Gastrocnemius medialis (tissue), 4 donors: ENCODE measurements at regions of chr10 and their contacts with region 1.

Region 1: DNA sequence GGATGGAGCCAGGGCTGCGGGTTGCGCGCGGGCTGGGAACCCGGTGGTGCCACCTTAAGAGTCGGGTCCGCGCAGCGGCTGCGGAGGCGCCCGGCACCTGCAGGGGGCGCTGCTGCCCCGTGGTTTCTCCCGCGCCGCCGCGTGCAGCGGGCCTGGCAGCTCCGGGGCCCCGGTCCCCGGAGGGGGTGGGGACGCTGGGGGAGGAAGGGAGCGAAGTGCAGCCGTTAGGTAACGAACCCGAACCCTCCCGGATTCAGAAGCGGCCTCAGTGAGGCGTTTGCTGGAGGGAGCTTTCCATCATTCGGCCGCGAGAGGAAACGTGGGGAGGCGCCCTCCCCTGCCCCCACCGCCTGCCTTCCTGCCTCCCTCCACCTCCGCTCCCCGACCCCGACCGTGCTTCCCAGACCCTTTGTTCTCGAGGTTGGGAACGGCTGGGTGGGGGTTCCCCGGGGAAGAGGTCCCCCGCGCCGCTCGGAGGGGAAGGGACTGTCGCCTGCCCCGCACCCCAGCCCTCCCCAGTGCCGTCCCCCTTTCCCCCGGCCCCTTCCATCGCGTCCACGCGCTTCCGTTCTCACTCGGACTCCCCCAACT is 29.6 kb downstream of the SKIDA1 start:
- DNase-seq: peak; percentile 36 to 62
- ATAC-seq: peak; percentile 84 to 88
- H3K4me3 ChIP-seq: peak overlapping the region; percentile 59 to 84 (median 70)
- H3K27ac ChIP-seq: peak overlapping the region in 2 of 4 donors; percentile 51 to 58
- H3K4me1 ChIP-seq: peaks cover 4 to 29% of the 10 kb centered on the region in 2 donors
- H3K27me3 ChIP-seq: peaks cover 0 to 42% (median 40%) of the 10 kb centered on the region in 3 donors
- CTCF ChIP-seq: peak; percentile 87 to 99 (median 98)
- POLR2A ChIP-seq: no peak

Region 2: DNA sequence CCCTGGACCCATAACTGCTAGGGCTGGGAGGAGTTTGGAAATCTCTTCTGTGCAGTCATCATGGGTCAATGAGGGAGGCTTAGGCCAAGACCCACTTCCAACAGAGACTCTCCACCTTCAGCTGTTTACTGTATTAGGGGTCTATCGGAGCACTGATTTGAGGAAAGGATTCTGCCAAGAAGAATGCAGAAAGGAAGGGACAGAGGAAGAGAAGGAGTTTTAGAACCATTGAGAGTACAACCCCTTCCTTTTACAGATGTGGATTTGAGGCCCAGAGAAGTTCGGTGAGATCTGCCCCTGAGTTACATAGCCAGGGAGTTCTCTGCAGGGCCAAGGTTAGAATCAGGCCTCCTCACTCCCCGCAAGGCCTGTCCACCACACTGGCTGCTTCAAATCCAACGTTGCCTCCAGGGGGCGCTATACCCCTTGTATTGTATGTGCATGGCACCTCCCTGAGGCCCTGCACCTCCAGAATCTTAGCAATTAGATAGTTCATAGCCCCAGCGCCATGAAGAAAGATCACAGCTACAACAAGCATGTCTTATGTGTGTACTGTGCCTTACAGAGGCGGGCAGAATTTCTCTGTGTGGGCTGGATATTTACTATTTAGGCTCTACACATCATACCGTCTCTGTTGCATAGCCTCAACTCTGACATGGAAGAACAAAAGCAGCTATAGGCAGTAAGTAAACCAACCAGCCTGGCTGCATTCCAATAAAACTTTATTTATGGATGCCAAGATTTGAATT is 217.2 kb before region 1 on chr10:
- in situ Hi-C with region 1: loop called in 2 of 4 experiments (anchors 10 to 25 kb)
- intact Hi-C with region 1: loop called (anchors 5 kb)
- DNase-seq: peak; percentile 50 to 61
- ATAC-seq: peak; percentile 33 to 51
- H3K4me3 ChIP-seq: no peak overlapping the region
- H3K27ac ChIP-seq: no peak overlapping the region
- H3K4me1 ChIP-seq: no peaks in the 10 kb centered on the region
- H3K27me3 ChIP-seq: no peaks in the 10 kb centered on the region
- CTCF ChIP-seq: peak in 4 of 5 experiments; percentile 53 to 61 (median 56)
- POLR2A ChIP-seq: no peak

Region 3: GRCh38 chr10:21475393-21475792 is 20.5 kb before region 1 on chr10:
- in situ Hi-C with region 1: no loop called
- intact Hi-C with region 1: no loop called
- DNase-seq: no peak
- ATAC-seq: no peak
- H3K4me3 ChIP-seq: no peak overlapping the region
- H3K27ac ChIP-seq: no peak overlapping the region
- H3K4me1 ChIP-seq: no peaks in the 10 kb centered on the region
- H3K27me3 ChIP-seq: no peaks in the 10 kb centered on the region
- CTCF ChIP-seq: no peak
- POLR2A ChIP-seq: no peak

Region 4: GRCh38 chr10:21533467-21534279 is 37.8 kb after region 1 on chr10 and contains the start of gene MLLT10:
- in situ Hi-C with region 1: no loop called
- intact Hi-C with region 1: loop called (anchors 1 kb)
- DNase-seq: peak; percentile 89 to 95
- ATAC-seq: peak; percentile 74 to 75
- H3K4me3 ChIP-seq: peak within 1 kb of the TSS; percentile 77 to 98 (median 88)
- H3K27ac ChIP-seq: peak within 1 kb of the TSS; percentile 90 to 100 (median 98)
- H3K4me1 ChIP-seq: peaks cover 25% of the 10 kb centered on the region in 2 donors
- H3K27me3 ChIP-seq: no peaks in the 10 kb centered on the region
- CTCF ChIP-seq: peak; percentile 33 to 54 (median 46)
- POLR2A ChIP-seq: peak; percentile 85 to 90
- total RNA-seq, gene MLLT10: 13.6 to 26.6 (median 21.6) TPM

Region 5: DNA sequence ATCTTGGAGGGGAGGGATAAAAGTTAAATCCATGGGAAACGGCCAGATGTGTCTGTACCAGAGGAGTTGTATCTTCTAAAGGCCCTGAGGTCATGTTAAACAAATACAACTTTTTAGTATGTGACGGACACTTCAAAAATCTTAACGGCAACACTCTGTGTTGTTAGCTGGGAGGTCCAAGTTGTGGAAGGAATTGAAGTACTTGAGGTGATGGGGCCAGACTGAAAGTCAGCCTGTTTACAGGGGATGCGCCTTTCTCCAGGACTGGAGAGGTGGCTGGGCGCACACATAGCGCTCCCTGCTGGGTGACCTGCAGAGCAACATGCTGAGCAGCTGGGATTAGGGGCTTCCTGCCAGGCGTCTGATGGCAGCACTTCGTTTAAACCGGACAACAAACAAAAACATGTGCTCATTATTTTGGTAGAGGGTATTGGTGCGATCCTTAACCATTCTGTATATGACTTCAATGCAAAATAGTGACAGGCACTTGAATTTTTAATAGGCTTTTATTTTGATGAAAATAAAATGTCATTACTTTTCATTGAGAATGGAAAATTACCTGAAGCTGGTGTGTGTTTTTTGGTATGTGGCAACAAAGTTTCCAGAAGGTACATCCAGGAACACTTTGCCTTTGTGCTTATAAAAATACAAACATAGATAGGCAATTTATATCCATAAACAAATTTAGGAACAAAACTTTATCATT is 236.4 kb after region 1 on chr10:
- in situ Hi-C with region 1: loop called (anchors 5 to 10 kb)
- intact Hi-C with region 1: loop called (anchors 1 kb)
- DNase-seq: peak; percentile 38 to 61
- ATAC-seq: peak; percentile 86
- H3K4me3 ChIP-seq: no peak overlapping the region
- H3K27ac ChIP-seq: no peak overlapping the region
- H3K4me1 ChIP-seq: no peaks in the 10 kb centered on the region
- H3K27me3 ChIP-seq: no peaks in the 10 kb centered on the region
- CTCF ChIP-seq: peak; percentile 66 to 90 (median 82)
- POLR2A ChIP-seq: no peak

Region 6: DNA sequence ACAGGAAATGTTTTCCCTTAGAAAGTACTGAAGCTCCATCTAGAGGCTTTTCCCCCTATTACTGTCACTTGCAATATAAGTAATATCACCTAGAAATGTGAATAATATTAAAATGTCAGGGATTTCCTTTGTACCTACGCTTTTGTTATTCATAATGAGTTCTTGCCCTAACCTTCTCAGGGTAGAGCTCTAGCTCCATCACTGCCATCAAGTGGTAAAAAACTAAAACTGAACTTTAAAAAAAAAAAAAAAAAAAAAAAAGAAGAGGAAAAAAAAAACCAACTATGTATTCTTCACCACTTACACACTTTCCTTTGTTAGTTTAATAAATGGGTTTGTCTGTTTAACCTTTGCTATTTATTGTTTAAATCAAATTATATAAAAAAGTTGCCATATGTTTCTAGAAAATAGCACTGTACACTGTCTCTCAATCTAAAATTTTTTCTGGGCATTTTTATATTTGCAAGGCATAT is 457.8 kb after region 1 on chr10:
- in situ Hi-C with region 1: loop called in 3 of 4 experiments (anchors 25 kb)
- intact Hi-C with region 1: loop called (anchors 2 kb)
- DNase-seq: no peak
- ATAC-seq: no peak
- H3K4me3 ChIP-seq: no peak overlapping the region
- H3K27ac ChIP-seq: no peak overlapping the region
- H3K4me1 ChIP-seq: peaks cover 0 to 3% of the 10 kb centered on the region in 2 donors
- H3K27me3 ChIP-seq: no peaks in the 10 kb centered on the region
- CTCF ChIP-seq: peak in 1 of 5 experiments; percentile 4
- POLR2A ChIP-seq: no peak

Region 7: GRCh38 chr10:22003079-22003913 is 507.4 kb after region 1 on chr10 and contains the start of gene DNAJC1:
- in situ Hi-C with region 1: loop called in 1 of 4 experiments (anchors 25 kb)
- intact Hi-C with region 1: loop called (anchors 5 kb)
- DNase-seq: peak; percentile 92 to 97
- ATAC-seq: peak; percentile 97
- H3K4me3 ChIP-seq: peak within 1 kb of the TSS; percentile 74 to 88 (median 84)
- H3K27ac ChIP-seq: peak within 1 kb of the TSS; percentile 82 to 96 (median 94)
- H3K4me1 ChIP-seq: peaks cover 14 to 18% of the 10 kb centered on the region in 2 donors
- H3K27me3 ChIP-seq: no peaks in the 10 kb centered on the region
- CTCF ChIP-seq: peak in 4 of 5 experiments; percentile 5 to 43 (median 26)
- POLR2A ChIP-seq: peak; percentile 85 to 90
- total RNA-seq, gene DNAJC1: 24.1 to 56.4 (median 35.7) TPM

Region 8: GRCh38 chr10:22436884-22437619 is 941.2 kb after region 1 on chr10:
- in situ Hi-C with region 1: no loop called
- intact Hi-C with region 1: loop called (anchors 10 kb)
- DNase-seq: peak; percentile 69 to 86
- ATAC-seq: peak; percentile 79 to 89
- H3K4me3 ChIP-seq: peak overlapping the region; percentile 70 to 95 (median 78)
- H3K27ac ChIP-seq: peak overlapping the region; percentile 86 to 95 (median 86)
- H3K4me1 ChIP-seq: peaks cover 12 to 19% of the 10 kb centered on the region in 2 donors
- H3K27me3 ChIP-seq: no peaks in the 10 kb centered on the region
- CTCF ChIP-seq: no peak
- POLR2A ChIP-seq: peak; percentile 71 to 76